Sigmoid colon (tissue), 7 donors: ENCODE measurements at regions of chr5 and their contacts with region 1.

Region 1: GRCh38 chr5:140647042-140647341 is 438 bp downstream of the NDUFA2 start:
- DNase-seq: no peak
- H3K4me3 ChIP-seq: peak overlapping the region; percentile 79 to 98 (median 85)
- H3K27ac ChIP-seq: peak overlapping the region; percentile 83 to 90 (median 86)
- H3K4me1 ChIP-seq: peaks cover 0 to 38% (median 28%) of the 10 kb centered on the region in 4 donors
- H3K27me3 ChIP-seq: no peaks in the 10 kb centered on the region
- CTCF ChIP-seq: no peak
- EP300 ChIP-seq: no peak
- POLR2A ChIP-seq: no peak

Region 2: DNA sequence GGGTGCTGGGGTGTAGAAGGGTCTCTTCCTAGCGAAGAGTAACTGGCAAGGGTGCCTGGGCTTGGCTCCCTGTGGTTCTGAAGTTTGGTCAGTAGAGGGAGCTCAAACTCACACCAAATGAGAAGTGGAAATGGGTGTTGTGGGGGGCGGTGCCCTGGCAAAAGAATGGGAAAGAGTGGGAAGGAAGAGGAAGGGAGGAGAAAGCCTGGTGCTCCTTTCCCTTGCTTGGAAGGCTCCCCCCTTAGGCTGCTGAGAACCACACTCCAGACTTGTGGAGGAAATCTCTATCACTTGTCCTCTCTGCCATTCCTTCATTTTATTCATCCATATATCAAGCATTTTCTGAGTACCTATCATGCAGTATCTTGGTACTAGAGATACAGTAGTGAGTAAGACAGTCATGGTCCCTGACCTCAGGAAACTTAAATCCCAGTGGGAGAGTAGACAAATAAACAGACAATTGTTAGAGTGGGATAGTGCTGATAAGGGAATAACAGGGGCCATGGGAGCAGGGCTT is 274.0 kb before region 1 on chr5:
- intact Hi-C with region 1: loop called (anchors 10 kb)
- DNase-seq: peak; percentile 83
- H3K4me3 ChIP-seq: no peak overlapping the region
- H3K27ac ChIP-seq: no peak overlapping the region
- H3K4me1 ChIP-seq: peaks cover 0 to 6% (median 1%) of the 10 kb centered on the region in 4 donors
- H3K27me3 ChIP-seq: no peaks in the 10 kb centered on the region
- CTCF ChIP-seq: peak; percentile 46 to 84 (median 78)
- EP300 ChIP-seq: no peak
- POLR2A ChIP-seq: no peak

Region 3: GRCh38 chr5:140401362-140402257 is 245.4 kb before region 1 on chr5 and contains the start of gene ANKHD1:
- intact Hi-C with region 1: loop called (anchors 5 kb)
- DNase-seq: peak; percentile 100
- H3K4me3 ChIP-seq: peak within 1 kb of the TSS; percentile 90 to 98 (median 96)
- H3K27ac ChIP-seq: peak within 1 kb of the TSS; percentile 98 to 99 (median 99)
- H3K4me1 ChIP-seq: peaks cover 0 to 52% (median 43%) of the 10 kb centered on the region in 4 donors
- H3K27me3 ChIP-seq: no peaks in the 10 kb centered on the region
- CTCF ChIP-seq: no peak
- EP300 ChIP-seq: no peak
- POLR2A ChIP-seq: peak; percentile 95 to 96
- total RNA-seq, gene ANKHD1: 93.5 to 109 (median 106) TPM

Region 4: GRCh38 chr5:140664359-140665119 is 17.5 kb after region 1 on chr5 and contains the start of gene WDR55:
- intact Hi-C with region 1: loop called (anchors 2 kb)
- DNase-seq: peak; percentile 98
- H3K4me3 ChIP-seq: peak within 1 kb of the TSS; percentile 57 to 89 (median 75)
- H3K27ac ChIP-seq: peak within 1 kb of the TSS; percentile 84 to 91 (median 86)
- H3K4me1 ChIP-seq: peaks cover 0 to 25% (median 22%) of the 10 kb centered on the region in 4 donors
- H3K27me3 ChIP-seq: no peaks in the 10 kb centered on the region
- CTCF ChIP-seq: no peak
- EP300 ChIP-seq: no peak
- POLR2A ChIP-seq: peak; percentile 71 to 86
- total RNA-seq, gene WDR55: 13.2 to 18.0 (median 15.1) TPM

Region 5: GRCh38 chr5:140690941-140691924 is 44.2 kb after region 1 on chr5 and contains the starts of genes HARS1 and HARS2:
- intact Hi-C with region 1: loop called (anchors 5 kb)
- DNase-seq: peak; percentile 93
- H3K4me3 ChIP-seq: peak within 1 kb of the TSS; percentile 48 to 87 (median 76)
- H3K27ac ChIP-seq: peak within 1 kb of the TSS; percentile 80 to 88 (median 83)
- H3K4me1 ChIP-seq: peaks cover 0 to 35% (median 26%) of the 10 kb centered on the region in 4 donors
- H3K27me3 ChIP-seq: no peaks in the 10 kb centered on the region
- CTCF ChIP-seq: no peak
- EP300 ChIP-seq: no peak
- POLR2A ChIP-seq: peak; percentile 44 to 61
- total RNA-seq, gene HARS1: 35.2 to 54.2 (median 43.5) TPM
- total RNA-seq, gene HARS2: 18.2 to 19.4 (median 18.9) TPM

Region 6: GRCh38 chr5:141172378-141173204 is 525.6 kb after region 1 on chr5 and contains the start of gene PCDHB7:
- intact Hi-C with region 1: no loop called
- DNase-seq: no peak
- H3K4me3 ChIP-seq: peak within 1 kb of the TSS in 3 of 4 donors; percentile 2 to 23 (median 12)
- H3K27ac ChIP-seq: no peak within 1 kb of the TSS
- H3K4me1 ChIP-seq: no peaks in the 10 kb centered on the region
- H3K27me3 ChIP-seq: peaks cover 0 to 34% (median 4%) of the 10 kb centered on the region in 3 donors
- CTCF ChIP-seq: peak in 1 of 4 experiments; percentile 23
- EP300 ChIP-seq: no peak
- POLR2A ChIP-seq: no peak
- total RNA-seq, gene PCDHB7: 1.4 to 5.3 (median 2.5) TPM